Cardiac septum (tissue), 1 donor: ENCODE measurements at regions of chr3 and their contacts with region 1.

Region 1: GRCh38 chr3:187745201-187746058 is at the start of gene BCL6:
- DNase-seq: peak; percentile 97
- total RNA-seq, gene BCL6: 67.4 TPM

Region 2: DNA sequence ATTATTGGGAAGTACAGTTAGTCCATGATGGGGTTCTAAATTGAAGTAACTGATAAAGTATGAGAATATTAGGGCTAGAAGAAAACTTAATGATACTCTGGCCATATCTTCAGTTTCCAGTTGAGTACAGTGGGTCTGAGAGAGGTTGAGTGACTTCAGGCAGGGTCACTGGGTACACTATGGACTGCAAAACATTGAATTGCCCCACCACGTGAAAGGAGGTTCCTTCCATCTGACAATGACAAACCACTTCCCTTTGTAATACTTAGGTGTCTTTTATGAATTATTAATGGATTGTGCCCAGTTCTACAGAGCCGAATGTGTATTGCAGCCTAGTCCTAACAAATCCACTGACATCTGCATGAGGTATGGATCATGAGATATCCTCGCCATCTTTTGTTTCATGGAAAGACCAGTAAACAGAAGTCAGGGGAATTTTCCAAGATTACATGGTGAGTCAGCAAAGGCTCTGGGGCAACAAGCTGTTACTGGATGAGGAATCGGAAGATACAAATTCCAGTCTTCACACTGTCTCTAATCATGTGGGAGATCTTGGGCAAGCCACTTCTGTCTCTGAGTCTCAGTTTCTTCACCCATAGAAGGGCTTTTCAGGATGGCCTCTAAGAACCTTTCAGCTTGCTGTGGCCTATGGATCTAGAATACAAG is 66.3 kb after region 1 on chr3:
- intact Hi-C with region 1: no loop called
- DNase-seq: no peak

Region 3: DNA sequence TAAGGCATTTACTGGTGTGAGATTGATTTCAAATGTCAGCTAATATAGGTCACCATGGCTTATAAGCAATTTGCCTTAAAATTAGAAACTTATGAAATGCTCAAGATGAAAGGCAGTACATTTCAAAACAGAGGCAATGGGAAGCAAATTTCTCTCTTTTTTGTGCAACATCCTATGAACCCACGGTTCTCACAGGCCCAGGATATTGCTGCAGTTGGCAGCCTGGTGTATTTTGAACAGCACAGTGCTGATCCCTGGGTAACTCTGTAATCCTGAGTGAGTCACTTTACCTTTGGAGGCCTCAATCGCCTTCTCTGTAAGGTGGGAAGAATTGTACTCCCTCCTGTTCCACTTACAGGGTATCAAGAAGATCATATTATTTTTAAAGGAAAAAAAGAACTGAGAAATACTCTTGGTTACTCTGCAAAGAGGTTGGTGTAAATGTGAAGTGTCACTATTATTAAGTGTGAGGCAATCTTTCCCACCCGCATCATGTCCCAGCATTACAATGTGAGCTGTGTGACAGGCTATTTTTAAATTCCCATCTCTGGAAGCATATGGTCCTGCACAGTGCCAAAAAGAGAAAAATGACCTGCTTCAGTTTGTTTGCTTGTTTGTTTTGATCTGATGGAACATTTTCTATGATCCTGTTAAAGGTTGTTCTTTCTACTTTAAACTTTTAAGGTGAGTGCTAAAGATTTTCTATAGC is 218.4 kb after region 1 on chr3:
- intact Hi-C with region 1: loop called (anchors 5 kb)
- DNase-seq: no peak

Region 4: DNA sequence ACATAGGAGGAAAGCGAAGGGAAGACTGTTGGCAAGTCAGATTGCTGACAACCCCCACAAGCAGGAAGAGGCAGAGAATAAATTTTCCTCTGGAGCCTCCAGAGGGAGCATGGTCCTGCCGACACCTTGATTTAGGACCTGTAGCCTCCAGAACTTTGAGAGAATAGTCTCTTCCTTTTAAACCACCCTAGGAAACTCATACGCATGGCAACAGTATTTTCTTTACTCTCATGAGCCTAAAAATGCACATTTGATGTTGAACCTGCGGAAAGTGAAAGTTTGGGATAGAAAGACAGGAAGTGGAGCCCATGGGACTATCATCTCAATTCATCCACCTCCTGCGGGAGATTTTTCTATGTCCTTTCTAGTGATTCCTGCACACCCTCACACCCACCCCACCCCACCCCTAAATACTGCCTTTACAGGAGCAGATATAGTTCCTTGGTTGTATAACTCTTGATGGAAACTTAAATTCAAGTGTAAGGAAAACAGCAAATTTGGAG is 291.8 kb after region 1 on chr3:
- intact Hi-C with region 1: loop called (anchors 5 kb)
- DNase-seq: no peak

Region 5: GRCh38 chr3:188286087-188286513 is 540.7 kb after region 1 on chr3:
- intact Hi-C with region 1: loop called (anchors 5 kb)
- DNase-seq: peak; percentile 80